ENCODE measurements at regions of chr1 and their contacts with region 1.

Region 1: DNA sequence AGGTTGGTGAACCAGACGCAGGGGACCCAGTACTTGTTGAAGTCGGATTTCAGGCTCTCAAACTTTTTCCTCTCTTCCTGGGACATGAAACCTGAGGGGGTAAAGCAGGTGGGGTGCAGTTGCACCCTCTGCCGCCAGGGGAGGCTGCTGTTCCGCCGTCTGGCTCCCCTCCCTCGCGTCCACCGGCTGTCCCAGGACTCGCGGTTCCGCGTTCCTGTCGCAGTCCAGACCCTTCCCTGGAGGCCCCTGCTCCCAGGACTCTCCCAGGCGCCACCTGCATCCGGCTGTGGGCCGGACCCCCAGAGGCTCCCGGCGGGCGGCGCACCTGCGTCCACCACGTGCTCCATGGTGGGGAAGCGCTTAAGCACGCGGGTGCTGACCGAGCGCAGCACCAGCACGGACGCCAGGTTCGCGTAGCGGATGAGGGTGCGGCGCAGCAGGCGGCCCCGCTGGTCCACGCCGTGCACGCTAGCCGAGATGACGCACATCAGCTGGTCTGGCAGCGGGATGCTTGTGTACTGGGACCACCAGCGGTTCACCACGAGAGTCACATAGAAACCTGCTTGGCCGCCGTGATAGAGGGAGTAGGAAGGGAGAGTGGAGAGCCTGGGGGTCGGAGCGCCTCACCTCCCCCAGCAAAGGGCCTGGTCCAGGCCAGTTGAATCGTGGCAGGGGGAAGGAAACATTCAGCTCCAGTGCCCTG is 1.7 kb downstream of the BEST4 start:
- DNase-seq: peak; percentile 87
- ATAC-seq: peak; percentile 69
- H3K4me3 Mint-ChIP-seq: peak overlapping the region; percentile 66
- H3K27ac Mint-ChIP-seq: peak overlapping the region; percentile 71
- H3K4me1 Mint-ChIP-seq: peaks cover 26% of the 10 kb centered on the region
- H3K27me3 Mint-ChIP-seq: no peaks in the 10 kb centered on the region

Region 2: GRCh38 chr1:44799770-44800584 is 13.7 kb after region 1 on chr1 and contains the start of gene PLK3:
- POLR2A ChIA-PET with region 1: interaction called, 23 read pairs
- DNase-seq: peak; percentile 96
- ATAC-seq: peak; percentile 77
- H3K4me3 Mint-ChIP-seq: peak within 1 kb of the TSS; percentile 92
- H3K27ac Mint-ChIP-seq: peak within 1 kb of the TSS; percentile 97
- H3K4me1 Mint-ChIP-seq: peaks cover 24% of the 10 kb centered on the region
- H3K27me3 Mint-ChIP-seq: no peaks in the 10 kb centered on the region
- total RNA-seq, gene PLK3: 68.8 to 70.7 TPM

Region 3: GRCh38 chr1:44807262-44808062 is 21.2 kb after region 1 on chr1 and contains the start of gene DYNLT4:
- POLR2A ChIA-PET with region 1: interaction called, 24 read pairs
- DNase-seq: peak; percentile 84
- ATAC-seq: peak; percentile 61
- H3K4me3 Mint-ChIP-seq: peak within 1 kb of the TSS; percentile 78
- H3K27ac Mint-ChIP-seq: peak within 1 kb of the TSS; percentile 99
- H3K4me1 Mint-ChIP-seq: peaks cover 55% of the 10 kb centered on the region
- H3K27me3 Mint-ChIP-seq: no peaks in the 10 kb centered on the region
- total RNA-seq, gene DYNLT4: 0.43 to 0.97 TPM

Measured in activated naive CD8-positive, alpha-beta T cell treated with anti-CD3 and anti-CD28 coated beads, Interleukin-2, amount 10 ng/mL, durations not matched to agents 7 days and 5 days (primary cell).